HepG2 (cell line): ENCODE measurements at regions of chr7 and their contacts with region 1.

Region 1: GRCh38 chr7:137592232-137592896 is 248.8 kb upstream of the PTN start:
- DNase-seq: peak; percentile 46
- ATAC-seq: peak; percentile 98
- H3K4me3 ChIP-seq: no peak overlapping the region
- H3K27ac ChIP-seq: no peak overlapping the region
- H3K4me1 ChIP-seq: no peaks in the 10 kb centered on the region; the same call in 1 of the 2 replicates
- H3K27me3 ChIP-seq: peaks cover 0 to 6% of the 10 kb centered on the region in 2 experiments; a peak in 2 of 5 replicates
- CTCF ChIP-seq: peak; percentile 89
- EP300 ChIP-seq: no peak
- POLR2A ChIP-seq: no peak
- RAD21 ChIP-seq: peak; percentile 66

Region 2: DNA sequence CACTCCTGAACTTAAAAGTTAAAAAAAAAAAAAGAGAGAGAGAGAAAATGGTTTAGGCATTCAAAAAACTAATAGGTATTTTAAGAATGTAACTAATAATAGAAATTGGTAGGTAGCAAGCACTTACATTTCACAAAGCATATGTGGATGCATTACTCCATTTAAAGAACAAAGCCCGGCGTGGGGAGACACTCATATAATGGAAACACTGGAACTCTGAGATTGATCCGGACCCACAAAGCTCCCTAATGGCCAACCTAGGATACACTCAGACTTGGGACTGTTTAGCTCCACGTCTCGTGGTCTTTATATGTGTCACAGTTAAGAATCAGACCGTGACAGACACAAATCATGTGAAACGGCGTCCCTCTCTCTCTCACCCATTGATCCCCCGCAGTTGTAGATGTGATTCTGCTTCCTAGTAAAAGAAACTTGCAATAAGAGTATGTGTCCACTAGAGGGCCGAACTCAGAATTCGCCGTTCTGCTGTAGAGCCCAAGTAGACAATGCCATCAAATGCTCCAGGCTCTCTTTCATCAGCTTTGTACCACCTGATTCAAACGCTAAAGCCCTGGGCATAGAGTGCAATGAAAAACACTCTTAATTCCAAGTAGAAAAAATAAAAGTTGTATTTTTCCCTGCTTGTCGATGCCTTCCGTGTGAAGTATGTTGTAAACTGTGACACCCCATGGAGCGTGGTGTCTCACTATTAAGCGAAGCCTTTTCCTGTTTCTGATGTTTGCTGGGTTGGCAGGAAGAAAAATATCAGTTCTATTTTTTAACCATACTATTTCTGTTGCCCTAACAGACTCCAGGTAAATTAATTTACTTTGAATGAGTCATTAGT is 1186.2 kb before region 1 on chr7:
- CTCF ChIA-PET with region 1: no interaction called
- POLR2A ChIA-PET with region 1: no interaction called
- in situ Hi-C with region 1: no loop called
- intact Hi-C with region 1: loop called (anchors 5 kb)
- DNase-seq: peak; percentile 43
- ATAC-seq: peak; percentile 98
- H3K4me3 ChIP-seq: no peak overlapping the region
- H3K27ac ChIP-seq: no peak overlapping the region
- H3K4me1 ChIP-seq: no peaks in the 10 kb centered on the region
- H3K27me3 ChIP-seq: no peaks in the 10 kb centered on the region
- CTCF ChIP-seq: peak; percentile 75
- EP300 ChIP-seq: no peak
- POLR2A ChIP-seq: no peak
- RAD21 ChIP-seq: no peak

Region 3: DNA sequence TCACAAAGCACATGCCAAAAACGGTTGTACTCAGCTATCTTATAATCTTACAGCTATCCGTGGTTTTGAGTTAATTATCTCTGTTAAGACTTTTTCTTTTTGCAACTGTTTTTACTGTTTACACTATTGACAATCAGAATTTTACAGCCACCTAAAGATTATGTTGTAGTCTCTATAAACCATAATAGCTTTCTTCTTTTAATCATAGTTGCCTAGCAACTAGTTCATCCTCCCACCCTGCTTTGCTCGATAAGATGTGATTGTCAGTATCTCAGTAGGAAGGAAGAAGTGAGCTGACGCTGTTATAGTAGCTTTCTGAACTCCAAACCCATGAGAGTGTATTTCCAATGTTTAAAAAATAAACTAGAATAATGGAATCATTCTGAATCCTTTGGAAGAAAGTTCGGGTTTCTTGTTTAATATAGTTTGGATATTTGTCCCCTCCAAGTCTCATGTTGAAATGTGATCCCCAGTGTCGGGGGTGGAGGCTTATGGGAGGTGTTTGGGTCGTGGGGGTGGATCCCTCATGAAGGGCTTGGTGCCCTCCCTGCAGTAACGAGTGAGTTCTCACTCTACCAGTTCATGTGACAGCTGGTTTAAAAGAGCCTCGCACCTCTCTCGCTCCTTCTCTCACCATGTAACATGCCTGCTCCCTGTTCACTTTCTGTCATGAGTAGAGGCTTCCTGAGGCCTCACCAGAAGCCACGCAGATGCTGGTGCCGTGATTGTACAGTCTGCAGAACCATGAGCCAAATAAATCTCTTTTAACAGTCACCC is 1040.7 kb after region 1 on chr7:
- CTCF ChIA-PET with region 1: no interaction called
- POLR2A ChIA-PET with region 1: no interaction called
- in situ Hi-C with region 1: no loop called
- intact Hi-C with region 1: no loop called
- DNase-seq: no peak
- ATAC-seq: no peak
- H3K4me3 ChIP-seq: no peak overlapping the region
- H3K27ac ChIP-seq: no peak overlapping the region
- H3K4me1 ChIP-seq: no peaks in the 10 kb centered on the region
- H3K27me3 ChIP-seq: peaks cover 0 to 7% of the 10 kb centered on the region in 2 experiments; a peak in 2 of 5 replicates
- CTCF ChIP-seq: no peak
- EP300 ChIP-seq: no peak
- POLR2A ChIP-seq: no peak
- RAD21 ChIP-seq: no peak